Activated CD4-positive, alpha-beta memory T cell treated with anti-CD3 and anti-CD28 coated beads for 36 hours (primary cell): ENCODE measurements at regions of chr20 and their contacts with region 1.

Region 1: DNA sequence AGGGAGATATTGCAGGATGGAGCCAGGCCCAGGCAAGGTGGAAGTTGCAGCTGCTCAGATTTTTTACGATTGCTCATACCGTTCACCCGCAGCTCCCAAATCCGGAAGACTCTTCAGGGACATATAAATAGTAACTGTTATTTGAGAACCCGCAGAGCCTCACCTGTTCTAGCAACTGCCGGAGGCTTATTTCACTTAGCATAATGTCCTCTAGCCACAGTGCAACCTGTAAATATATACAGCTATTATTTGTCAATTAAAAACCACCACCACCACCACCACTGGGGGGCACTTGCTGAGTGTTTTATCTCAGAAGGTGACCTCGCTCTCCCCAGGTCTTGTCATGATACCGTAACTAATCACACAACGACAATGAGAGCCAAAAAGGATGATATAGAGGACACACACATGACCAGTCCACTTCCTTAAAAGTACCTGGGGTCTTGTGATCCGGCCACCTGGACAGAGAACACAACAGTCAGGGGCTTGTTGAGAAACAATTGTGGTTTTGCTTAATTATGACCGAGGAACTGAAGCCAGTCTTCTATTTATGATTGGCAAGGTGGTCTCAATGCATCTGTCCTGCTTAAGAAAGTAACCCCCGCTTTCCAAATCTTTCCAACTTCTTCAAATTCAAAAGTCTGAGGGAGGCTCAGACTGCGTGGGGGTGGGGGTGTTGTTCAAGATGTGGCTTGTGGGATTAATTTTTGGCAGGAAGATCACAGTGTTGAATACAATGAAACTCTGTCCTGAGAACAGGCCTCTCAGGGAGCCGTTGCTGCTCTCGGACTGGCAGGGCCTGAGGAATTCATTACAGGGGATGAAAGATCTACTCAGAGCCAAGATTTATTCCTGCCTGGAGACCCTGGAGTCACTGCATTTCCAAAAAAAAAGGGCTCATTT is 107.7 kb upstream of the PRND start:
- DNase-seq: peak; percentile 79
- H3K4me3 Mint-ChIP-seq: no peak overlapping the region
- H3K27ac Mint-ChIP-seq: no peak overlapping the region
- H3K4me1 Mint-ChIP-seq: peaks cover 3% of the 10 kb centered on the region
- H3K27me3 Mint-ChIP-seq: no peaks in the 10 kb centered on the region

Region 2: GRCh38 chr20:4666001-4666479 is 52.1 kb after region 1 on chr20:
- CTCF ChIA-PET with region 1: interaction called, 3 read pairs
- POLR2A ChIA-PET with region 1: no interaction called
- intact Hi-C with region 1: loop called (anchors 5 kb)
- DNase-seq: peak; percentile 78
- H3K4me3 Mint-ChIP-seq: peak overlapping the region; percentile 64
- H3K27ac Mint-ChIP-seq: peak overlapping the region; percentile 88
- H3K4me1 Mint-ChIP-seq: peaks cover 36% of the 10 kb centered on the region
- H3K27me3 Mint-ChIP-seq: no peaks in the 10 kb centered on the region

Region 3: GRCh38 chr20:4714818-4715217 is 100.8 kb after region 1 on chr20:
- CTCF ChIA-PET with region 1: interaction called, 194 read pairs
- POLR2A ChIA-PET with region 1: no interaction called
- intact Hi-C with region 1: loop called (anchors 1 kb)
- DNase-seq: no peak
- H3K4me3 Mint-ChIP-seq: no peak overlapping the region
- H3K27ac Mint-ChIP-seq: no peak overlapping the region
- H3K4me1 Mint-ChIP-seq: peaks cover 3% of the 10 kb centered on the region
- H3K27me3 Mint-ChIP-seq: no peaks in the 10 kb centered on the region

Region 4: DNA sequence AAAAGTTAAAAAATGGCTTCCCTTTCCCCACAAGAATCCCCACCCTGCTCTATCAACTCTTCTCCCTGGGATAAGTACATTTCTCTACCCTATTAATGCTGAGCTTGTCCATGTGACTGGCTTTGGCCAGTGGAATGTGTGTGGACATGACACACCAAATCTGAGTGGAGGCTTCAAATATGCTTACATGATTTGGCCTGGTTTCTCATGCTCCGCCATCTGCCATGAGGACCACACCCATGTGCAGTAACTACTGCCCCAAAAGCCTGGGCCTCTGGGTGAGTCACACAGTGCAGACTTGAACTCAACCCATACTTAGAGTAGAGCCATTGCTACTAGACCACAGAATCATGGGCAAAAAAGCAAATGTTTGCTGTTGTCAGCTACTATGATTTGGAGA is 173.1 kb after region 1 on chr20:
- CTCF ChIA-PET with region 1: no interaction called
- POLR2A ChIA-PET with region 1: no interaction called
- intact Hi-C with region 1: no loop called
- DNase-seq: no peak
- H3K4me3 Mint-ChIP-seq: no peak overlapping the region
- H3K27ac Mint-ChIP-seq: peak overlapping the region; percentile 52
- H3K4me1 Mint-ChIP-seq: peaks cover 12% of the 10 kb centered on the region
- H3K27me3 Mint-ChIP-seq: no peaks in the 10 kb centered on the region